A673 (cell line): ENCODE measurements at regions of chr15 and their contacts with region 1.

Region 1: DNA sequence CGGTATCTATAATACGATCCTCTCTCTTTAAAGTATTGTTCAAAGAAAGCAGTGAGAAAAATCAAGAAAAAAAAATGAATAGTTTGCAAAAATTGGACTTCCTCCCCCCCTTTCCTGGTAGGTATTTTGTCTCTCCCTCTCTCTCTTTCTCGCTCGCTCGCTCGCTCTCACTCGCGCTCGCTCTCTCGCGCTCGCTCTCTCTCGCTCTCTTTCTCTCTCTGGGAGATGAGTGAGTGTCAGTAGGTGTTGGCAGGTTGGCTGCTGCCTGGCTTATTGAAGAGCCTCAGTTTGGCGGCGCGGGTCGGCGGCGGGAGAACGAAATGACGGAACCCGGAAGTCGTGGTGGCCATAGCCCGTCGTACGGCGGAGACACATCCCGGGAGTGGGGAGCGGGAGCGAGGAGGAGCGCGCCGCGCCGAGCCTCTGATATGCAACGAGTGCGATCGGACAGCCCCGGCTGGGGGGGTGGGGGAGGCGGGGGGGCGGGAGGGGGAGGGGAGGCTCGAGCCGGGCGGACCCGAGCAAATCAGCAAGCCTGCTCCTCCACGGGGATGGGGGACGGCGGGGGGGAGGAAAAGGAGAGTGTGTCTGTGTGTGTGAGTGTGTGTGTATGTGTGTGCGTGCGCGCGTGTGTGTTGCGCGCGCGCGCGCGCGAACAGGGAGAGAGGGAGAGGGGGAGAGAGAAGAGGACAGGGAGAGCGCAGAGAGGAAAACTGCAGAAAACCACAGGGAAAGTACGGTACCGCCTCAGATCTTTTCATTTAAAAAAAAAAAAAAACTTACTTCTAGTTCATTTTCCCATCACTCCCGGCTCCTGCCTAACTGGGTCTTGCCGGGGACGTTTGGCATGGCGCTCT is at the start of gene MEIS2:
- DNase-seq: peak; percentile 92
- H3K4me3 ChIP-seq: peak within 1 kb of the TSS; percentile 67
- H3K27ac ChIP-seq: peak within 1 kb of the TSS; percentile 80
- H3K4me1 ChIP-seq: peaks cover 8% of the 10 kb centered on the region
- H3K27me3 ChIP-seq: peaks cover 33% of the 10 kb centered on the region
- CTCF ChIP-seq: no peak
- total RNA-seq, gene MEIS2: 9.3 and 11.7 TPM in 2 replicates

Region 2: GRCh38 chr15:35751413-35752133 is 1348.8 kb before region 1 on chr15:
- CTCF ChIA-PET with region 1: no interaction called
- POLR2A ChIA-PET with region 1: no interaction called
- intact Hi-C with region 1: loop called (anchors 10 kb)
- DNase-seq: peak; percentile 86
- H3K4me3 ChIP-seq: peak overlapping the region; percentile 6
- H3K27ac ChIP-seq: no peak overlapping the region
- H3K4me1 ChIP-seq: peaks cover 5% of the 10 kb centered on the region
- H3K27me3 ChIP-seq: no peaks in the 10 kb centered on the region
- CTCF ChIP-seq: peak; percentile 86

Region 3: GRCh38 chr15:36294359-36294758 is 806.0 kb before region 1 on chr15:
- CTCF ChIA-PET with region 1: no interaction called
- POLR2A ChIA-PET with region 1: no interaction called
- intact Hi-C with region 1: loop called (anchors 10 kb)
- DNase-seq: peak; percentile 33
- H3K4me3 ChIP-seq: no peak overlapping the region
- H3K27ac ChIP-seq: no peak overlapping the region
- H3K4me1 ChIP-seq: no peaks in the 10 kb centered on the region
- H3K27me3 ChIP-seq: peaks cover 71% of the 10 kb centered on the region
- CTCF ChIP-seq: no peak

Region 4: DNA sequence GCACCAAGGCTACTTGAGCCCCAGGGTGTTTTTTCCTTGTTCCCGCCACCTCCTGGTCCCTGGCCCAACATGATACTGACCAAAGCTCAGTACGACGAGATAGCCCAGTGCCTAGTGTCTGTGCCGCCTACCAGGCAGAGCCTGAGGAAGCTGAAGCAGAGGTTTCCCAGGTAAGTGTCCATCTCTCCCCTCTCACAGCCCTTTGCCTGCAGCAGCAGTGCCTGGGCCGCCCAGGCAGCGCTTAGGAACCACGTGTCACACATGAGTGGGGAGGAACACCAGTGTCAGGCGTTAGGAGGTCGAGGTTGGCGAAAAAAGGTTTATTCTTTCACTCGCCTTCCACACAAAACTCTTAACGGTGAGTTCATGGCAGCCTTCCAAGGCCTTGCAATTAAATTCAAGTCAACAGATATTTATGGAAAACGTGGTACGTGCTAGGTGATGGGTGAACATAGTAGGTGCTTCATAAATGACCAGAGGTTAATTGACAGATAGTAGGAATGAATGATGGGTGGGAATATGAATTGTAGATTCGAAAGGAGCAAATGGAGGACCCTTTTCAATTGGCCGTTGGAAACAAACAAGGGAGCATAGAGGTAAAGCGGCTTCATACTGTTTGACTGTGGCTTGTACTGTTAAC is 520.4 kb before region 1 on chr15:
- CTCF ChIA-PET with region 1: no interaction called
- POLR2A ChIA-PET with region 1: no interaction called
- intact Hi-C with region 1: loop called (anchors 5 kb)
- DNase-seq: no peak
- H3K4me3 ChIP-seq: peak overlapping the region; percentile 66
- H3K27ac ChIP-seq: peak overlapping the region; percentile 82
- H3K4me1 ChIP-seq: no peaks in the 10 kb centered on the region
- H3K27me3 ChIP-seq: no peaks in the 10 kb centered on the region
- CTCF ChIP-seq: no peak

Region 5: DNA sequence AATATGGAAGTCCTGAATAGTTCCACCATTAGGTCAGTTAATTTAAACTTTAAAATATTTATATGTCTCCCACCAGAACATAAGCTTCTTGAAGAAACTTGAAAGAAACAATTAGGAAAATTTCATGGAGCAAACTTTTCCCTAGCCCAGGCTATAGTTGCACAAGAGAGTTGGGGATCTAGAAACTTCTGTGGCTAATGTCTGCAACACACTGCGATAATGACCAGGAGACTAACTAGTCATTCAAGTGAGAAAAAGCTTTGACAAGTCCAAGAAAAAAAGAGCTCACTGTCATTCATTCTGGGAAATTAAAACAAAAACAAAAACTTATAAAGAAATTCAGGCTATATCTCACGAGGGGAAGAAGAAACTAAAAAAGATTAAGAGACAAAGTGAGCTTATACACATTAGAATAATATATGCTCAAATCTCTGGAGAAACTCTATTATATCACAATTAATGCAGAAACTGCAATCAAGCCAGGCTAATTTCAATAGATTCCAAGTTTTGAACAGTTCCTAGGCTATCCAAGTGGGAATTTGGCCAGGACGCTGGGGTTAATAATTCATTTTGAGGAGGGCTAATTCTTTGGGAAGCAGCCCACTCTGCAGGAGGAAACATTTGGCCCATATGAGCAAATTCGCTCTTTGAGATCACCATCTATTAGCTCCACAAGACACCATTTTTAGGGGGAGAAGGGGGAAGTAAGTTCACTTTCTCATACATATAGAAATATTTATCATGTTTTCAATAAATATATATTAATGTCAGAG is 134.6 kb before region 1 on chr15:
- CTCF ChIA-PET with region 1: interaction called, 15 read pairs
- POLR2A ChIA-PET with region 1: no interaction called
- intact Hi-C with region 1: no loop called
- DNase-seq: no peak
- H3K4me3 ChIP-seq: no peak overlapping the region
- H3K27ac ChIP-seq: no peak overlapping the region
- H3K4me1 ChIP-seq: no peaks in the 10 kb centered on the region
- H3K27me3 ChIP-seq: no peaks in the 10 kb centered on the region
- CTCF ChIP-seq: no peak

Region 6: GRCh38 chr15:37028625-37029296 is 71.6 kb before region 1 on chr15:
- CTCF ChIA-PET with region 1: interaction called, 3 read pairs
- POLR2A ChIA-PET with region 1: interaction called, 3 read pairs
- intact Hi-C with region 1: loop called (anchors 5 kb)
- DNase-seq: peak; percentile 83
- H3K4me3 ChIP-seq: no peak overlapping the region
- H3K27ac ChIP-seq: peak overlapping the region; percentile 75
- H3K4me1 ChIP-seq: peaks cover 21% of the 10 kb centered on the region
- H3K27me3 ChIP-seq: no peaks in the 10 kb centered on the region
- CTCF ChIP-seq: no peak